Panc1 (cell line): ENCODE measurements at regions of chr1 and their contacts with region 1.

Region 1: DNA sequence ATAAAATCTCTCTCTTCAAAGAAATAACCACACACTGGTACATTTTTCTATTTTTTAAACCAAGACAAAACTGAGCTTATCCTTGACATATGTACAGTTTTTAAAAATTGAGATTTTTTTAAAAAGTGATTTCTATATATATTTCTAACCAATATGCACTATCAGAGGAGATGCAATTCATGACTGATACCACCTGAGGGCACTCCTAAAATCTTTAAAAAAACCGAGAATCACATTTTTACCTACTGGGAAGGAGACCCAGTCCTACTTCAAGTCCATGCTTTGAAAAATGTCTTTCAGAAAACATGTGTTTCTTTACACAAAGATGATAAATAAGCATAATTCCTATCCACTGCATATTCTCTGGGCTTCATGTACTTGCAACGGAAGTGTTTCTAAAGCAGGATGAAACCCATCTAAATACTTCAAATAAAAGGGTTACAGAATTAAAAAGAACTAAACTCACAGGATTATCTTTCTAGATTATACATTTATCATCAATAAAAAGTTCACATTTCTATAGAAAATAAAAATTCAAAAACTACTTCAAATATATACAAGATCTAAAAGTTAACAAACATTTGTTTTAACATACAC is 98.6 kb downstream of the ENAH start:
- DNase-seq: no peak
- ATAC-seq: no peak
- H3K4me3 ChIP-seq: no peak overlapping the region
- H3K27ac ChIP-seq: no peak overlapping the region
- H3K4me1 ChIP-seq: no peaks in the 10 kb centered on the region
- H3K27me3 ChIP-seq: no peaks in the 10 kb centered on the region
- CTCF ChIP-seq: peak; percentile 64; the same call in 1 of the 2 replicates

Region 2: DNA sequence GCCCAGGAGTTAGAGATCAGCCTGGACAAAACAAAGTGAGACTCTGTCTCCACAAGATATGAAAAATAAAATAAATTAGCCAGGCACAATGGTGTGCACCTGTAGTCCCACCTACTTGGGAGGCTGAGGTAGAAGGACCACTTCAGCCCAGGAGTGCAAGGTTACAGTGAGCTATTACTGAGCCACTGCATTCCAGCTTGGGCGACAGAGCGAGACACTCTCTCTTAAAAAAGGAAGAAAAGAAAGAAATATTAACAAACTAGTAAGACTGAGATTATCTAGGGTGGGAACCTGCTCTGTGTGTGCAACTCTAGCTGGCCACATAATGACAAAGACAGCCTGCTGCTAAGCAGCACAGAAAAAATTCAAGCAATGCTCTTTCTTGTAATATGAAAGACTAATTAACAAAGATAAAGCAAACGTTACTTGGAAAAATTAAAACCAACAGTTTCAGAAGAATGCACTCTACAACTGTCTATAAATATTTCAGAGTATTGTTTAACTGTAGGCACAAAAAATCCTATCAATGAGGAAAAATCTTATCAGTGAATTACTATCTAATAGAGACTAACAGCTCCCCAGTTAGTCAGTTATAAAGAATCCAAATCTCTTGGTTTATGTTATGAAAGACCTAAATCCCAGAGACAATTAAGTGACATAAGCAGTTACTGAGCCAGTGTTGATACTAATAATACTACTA is 24.1 kb after region 1 on chr1:
- CTCF ChIA-PET with region 1: no interaction called
- POLR2A ChIA-PET with region 1: no interaction called
- in situ Hi-C with region 1: no loop called
- intact Hi-C with region 1: no loop called
- DNase-seq: no peak
- ATAC-seq: no peak
- H3K4me3 ChIP-seq: no peak overlapping the region
- H3K27ac ChIP-seq: no peak overlapping the region
- H3K4me1 ChIP-seq: 0 out of 2 replicates have a peak, but pooled peaks cover 8% of the 10 kb centered on the region
- H3K27me3 ChIP-seq: no peaks in the 10 kb centered on the region
- CTCF ChIP-seq: no peak

Region 3: GRCh38 chr1:225677350-225678124 is 123.2 kb after region 1 on chr1:
- CTCF ChIA-PET with region 1: no interaction called
- POLR2A ChIA-PET with region 1: interaction called, 10 read pairs
- in situ Hi-C with region 1: no loop called
- intact Hi-C with region 1: no loop called
- DNase-seq: no peak
- ATAC-seq: no peak
- H3K4me3 ChIP-seq: no peak overlapping the region
- H3K27ac ChIP-seq: no peak overlapping the region
- H3K4me1 ChIP-seq: no peaks in the 10 kb centered on the region
- H3K27me3 ChIP-seq: no peaks in the 10 kb centered on the region
- CTCF ChIP-seq: no peak